GM12878 (cell line): ENCODE measurements at regions of chr17 and their contacts with region 1.

Region 1: DNA sequence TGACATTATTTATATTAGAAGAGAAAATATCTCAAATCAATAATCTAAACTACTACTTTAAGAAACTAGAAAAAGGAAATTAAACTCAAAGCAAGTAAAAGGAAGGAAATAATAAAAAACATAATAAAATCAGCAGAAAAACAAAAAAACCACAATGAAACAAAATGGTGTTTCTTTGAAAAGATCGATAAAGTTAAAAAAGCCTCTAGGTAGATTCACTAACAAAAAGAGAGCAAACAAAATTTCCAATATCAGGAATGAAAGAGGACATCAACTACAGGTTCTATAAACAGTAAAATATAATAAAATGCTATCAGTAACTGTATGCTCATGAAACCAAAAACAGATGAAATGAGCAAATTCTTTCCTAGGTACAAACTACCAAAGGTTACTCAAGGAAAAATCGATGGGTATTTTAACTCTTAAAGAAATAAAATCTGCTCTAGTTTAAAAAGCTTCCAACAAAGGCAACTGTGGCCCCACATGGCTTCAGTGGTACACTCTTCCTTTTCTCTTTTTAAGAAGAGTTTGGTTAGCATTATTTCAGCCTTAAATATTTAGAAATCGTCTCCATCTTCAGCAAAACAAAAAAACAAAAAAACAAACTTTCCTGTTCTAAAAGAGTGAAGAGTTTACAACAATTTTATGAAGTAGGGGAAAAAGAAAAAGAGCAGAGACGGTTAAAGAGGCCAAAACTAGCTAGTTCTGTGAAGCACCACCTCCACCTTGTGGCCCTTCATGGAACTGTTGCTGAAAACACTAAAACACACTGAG is 102.2 kb downstream of the TRIM37 start:
- DNase-seq: peak; percentile 48
- ATAC-seq: peak; percentile 55
- H3K4me3 ChIP-seq: no peak overlapping the region
- H3K27ac ChIP-seq: no peak overlapping the region
- H3K4me1 ChIP-seq: peaks cover 18% of the 10 kb centered on the region
- H3K27me3 ChIP-seq: no peaks in the 10 kb centered on the region
- CTCF ChIP-seq: peak; percentile 91 to 93 (median 92)
- EP300 ChIP-seq: no peak
- POLR2A ChIP-seq: no peak
- RAD21 ChIP-seq: peak; percentile 98

Region 2: GRCh38 chr17:58541249-58541648 is 463.3 kb before region 1 on chr17:
- CTCF ChIA-PET with region 1: interaction called, 12 read pairs
- POLR2A ChIA-PET with region 1: no interaction called
- RAD21 ChIA-PET with region 1: no interaction called
- SMC1A ChIA-PET with region 1: interaction called, 7 read pairs
- in situ Hi-C with region 1: no loop called
- intact Hi-C with region 1: no loop called
- DNase-seq: no peak
- ATAC-seq: peak; percentile 88
- H3K4me3 ChIP-seq: no peak overlapping the region
- H3K27ac ChIP-seq: no peak overlapping the region
- H3K4me1 ChIP-seq: no peaks in the 10 kb centered on the region
- H3K27me3 ChIP-seq: no peaks in the 10 kb centered on the region; a peak in 1 of 4 replicates
- CTCF ChIP-seq: peak; percentile 41 to 59 (median 47)
- EP300 ChIP-seq: no peak
- POLR2A ChIP-seq: no peak
- RAD21 ChIP-seq: peak; percentile 49

Region 3: GRCh38 chr17:58587702-58588254 is 416.7 kb before region 1 on chr17:
- CTCF ChIA-PET with region 1: interaction called, 51 read pairs
- POLR2A ChIA-PET with region 1: no interaction called
- RAD21 ChIA-PET with region 1: interaction called, 26 read pairs
- SMC1A ChIA-PET with region 1: interaction called, 53 read pairs
- in situ Hi-C with region 1: loop called (anchors 5 kb)
- intact Hi-C with region 1: loop called (anchors 1 kb)
- DNase-seq: no peak
- ATAC-seq: peak; percentile 92
- H3K4me3 ChIP-seq: no peak overlapping the region
- H3K27ac ChIP-seq: no peak overlapping the region
- H3K4me1 ChIP-seq: no peaks in the 10 kb centered on the region
- H3K27me3 ChIP-seq: no peaks in the 10 kb centered on the region
- CTCF ChIP-seq: peak; percentile 94 to 97 (median 97)
- EP300 ChIP-seq: no peak
- POLR2A ChIP-seq: no peak
- RAD21 ChIP-seq: peak; percentile 95

Region 4: GRCh38 chr17:58710936-58711775 is 293.4 kb before region 1 on chr17:
- CTCF ChIA-PET with region 1: interaction called, 110 read pairs
- POLR2A ChIA-PET with region 1: interaction called, 4 read pairs
- RAD21 ChIA-PET with region 1: interaction called, 71 read pairs
- SMC1A ChIA-PET with region 1: interaction called, 62 read pairs
- in situ Hi-C with region 1: loop called (anchors 5 kb)
- intact Hi-C with region 1: loop called (anchors 1 kb)
- DNase-seq: no peak
- ATAC-seq: peak; percentile 45; the same call in 2 of the 3 replicates
- H3K4me3 ChIP-seq: no peak overlapping the region
- H3K27ac ChIP-seq: no peak overlapping the region
- H3K4me1 ChIP-seq: peaks cover 16% of the 10 kb centered on the region
- H3K27me3 ChIP-seq: no peaks in the 10 kb centered on the region
- CTCF ChIP-seq: peak; percentile 57 to 71 (median 59)
- EP300 ChIP-seq: no peak
- POLR2A ChIP-seq: no peak
- RAD21 ChIP-seq: peak; percentile 92

Region 5: DNA sequence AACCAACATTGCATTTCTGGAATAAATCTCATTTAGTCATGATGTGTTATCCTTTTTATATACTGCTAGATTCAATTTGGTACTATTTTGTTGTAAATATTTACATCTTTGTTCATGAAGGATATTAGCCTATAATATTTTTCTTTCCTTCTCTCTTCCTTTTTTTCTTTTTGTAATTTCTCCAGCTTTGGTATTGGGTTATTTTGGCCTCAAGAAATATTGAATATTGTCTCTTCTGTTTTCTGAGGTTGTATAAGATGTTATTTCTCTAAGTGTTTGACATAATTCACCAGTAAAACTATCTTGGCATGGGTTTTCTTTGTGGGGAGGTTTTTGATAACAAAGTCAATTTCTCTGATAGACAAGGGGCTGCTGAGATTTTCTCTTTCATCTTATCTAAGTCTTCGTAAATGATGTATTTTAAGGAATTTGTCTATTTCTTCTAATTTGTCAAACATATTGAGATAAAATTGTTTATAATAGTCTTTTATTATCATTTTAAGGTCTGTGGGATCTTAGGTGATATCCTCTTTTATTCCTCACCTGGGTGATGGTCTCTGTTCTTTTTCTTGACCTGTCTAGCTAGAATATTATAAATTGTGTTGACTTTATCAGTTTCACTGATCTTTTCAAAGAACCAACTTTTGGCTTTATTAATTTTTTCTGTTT is 204.2 kb before region 1 on chr17:
- CTCF ChIA-PET with region 1: no interaction called
- POLR2A ChIA-PET with region 1: no interaction called
- RAD21 ChIA-PET with region 1: no interaction called
- SMC1A ChIA-PET with region 1: no interaction called
- in situ Hi-C with region 1: no loop called
- intact Hi-C with region 1: no loop called
- DNase-seq: no peak
- ATAC-seq: no peak
- H3K4me3 ChIP-seq: no peak overlapping the region
- H3K27ac ChIP-seq: no peak overlapping the region
- H3K4me1 ChIP-seq: no peaks in the 10 kb centered on the region
- H3K27me3 ChIP-seq: no peaks in the 10 kb centered on the region
- CTCF ChIP-seq: no peak
- EP300 ChIP-seq: no peak
- POLR2A ChIP-seq: no peak
- RAD21 ChIP-seq: no peak

Region 6: DNA sequence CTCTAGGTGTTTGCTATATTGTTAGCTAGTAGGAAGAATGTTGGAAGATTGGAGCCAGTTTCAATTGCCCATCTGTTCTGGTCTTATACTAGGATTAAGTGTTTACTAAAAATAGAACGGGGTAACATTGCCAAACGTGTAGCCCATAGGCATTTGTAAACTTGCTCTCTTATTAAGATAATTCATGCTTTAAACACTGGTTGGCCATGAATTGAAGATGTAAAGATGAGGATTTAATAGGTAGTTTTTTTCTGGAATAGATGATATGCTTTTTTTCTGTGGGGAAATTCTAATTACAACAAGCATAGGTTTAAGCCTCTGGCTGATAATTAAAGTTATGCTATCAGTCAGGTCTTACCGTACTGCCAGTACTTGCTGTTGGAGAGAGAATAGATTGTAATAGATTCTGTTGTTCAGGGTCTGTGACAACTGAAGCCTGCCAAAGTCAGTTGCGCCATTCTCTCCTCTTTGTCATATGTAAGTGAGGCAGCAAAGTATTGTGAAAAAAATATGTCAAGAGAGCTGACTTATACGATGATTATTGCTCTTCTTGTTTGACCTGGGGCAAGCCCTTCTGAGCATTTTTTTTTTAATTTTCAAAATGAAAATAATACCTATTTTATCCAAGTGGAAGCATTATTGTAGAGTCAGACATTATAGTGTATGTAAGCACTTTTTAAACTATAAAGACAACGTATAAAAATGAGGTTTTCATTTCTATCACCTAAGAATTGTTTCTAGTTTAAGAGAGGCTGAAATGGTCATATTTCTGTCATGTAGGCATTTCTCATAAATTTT is 181.9 kb before region 1 on chr17:
- CTCF ChIA-PET with region 1: no interaction called
- POLR2A ChIA-PET with region 1: no interaction called
- RAD21 ChIA-PET with region 1: no interaction called
- SMC1A ChIA-PET with region 1: no interaction called
- in situ Hi-C with region 1: no loop called
- intact Hi-C with region 1: no loop called
- DNase-seq: no peak
- ATAC-seq: no peak
- H3K4me3 ChIP-seq: no peak overlapping the region
- H3K27ac ChIP-seq: no peak overlapping the region
- H3K4me1 ChIP-seq: no peaks in the 10 kb centered on the region
- H3K27me3 ChIP-seq: no peaks in the 10 kb centered on the region
- CTCF ChIP-seq: no peak
- EP300 ChIP-seq: no peak
- POLR2A ChIP-seq: no peak
- RAD21 ChIP-seq: no peak

Region 7: GRCh38 chr17:58969156-58969555 is 35.4 kb before region 1 on chr17:
- CTCF ChIA-PET with region 1: interaction called, 59 read pairs
- POLR2A ChIA-PET with region 1: interaction called, 5 read pairs
- RAD21 ChIA-PET with region 1: interaction called, 11 read pairs
- SMC1A ChIA-PET with region 1: interaction called, 10 read pairs
- in situ Hi-C with region 1: no loop called
- intact Hi-C with region 1: no loop called
- DNase-seq: no peak
- ATAC-seq: peak; percentile 83
- H3K4me3 ChIP-seq: no peak overlapping the region
- H3K27ac ChIP-seq: no peak overlapping the region
- H3K4me1 ChIP-seq: peaks cover 4% of the 10 kb centered on the region
- H3K27me3 ChIP-seq: no peaks in the 10 kb centered on the region
- CTCF ChIP-seq: no peak
- EP300 ChIP-seq: no peak
- POLR2A ChIP-seq: no peak
- RAD21 ChIP-seq: no peak

Region 8: GRCh38 chr17:59018019-59018418 is 13.5 kb after region 1 on chr17:
- CTCF ChIA-PET with region 1: interaction called, 12 read pairs
- POLR2A ChIA-PET with region 1: no interaction called
- RAD21 ChIA-PET with region 1: no interaction called
- SMC1A ChIA-PET with region 1: interaction called, 3 read pairs
- in situ Hi-C with region 1: no loop called
- intact Hi-C with region 1: no loop called
- DNase-seq: no peak
- ATAC-seq: no peak
- H3K4me3 ChIP-seq: no peak overlapping the region
- H3K27ac ChIP-seq: no peak overlapping the region
- H3K4me1 ChIP-seq: no peaks in the 10 kb centered on the region
- H3K27me3 ChIP-seq: no peaks in the 10 kb centered on the region
- CTCF ChIP-seq: no peak
- EP300 ChIP-seq: no peak
- POLR2A ChIP-seq: no peak
- RAD21 ChIP-seq: no peak

Region 9: GRCh38 chr17:59399900-59400299 is 395.4 kb after region 1 on chr17:
- CTCF ChIA-PET with region 1: no interaction called
- POLR2A ChIA-PET with region 1: no interaction called
- RAD21 ChIA-PET with region 1: no interaction called
- SMC1A ChIA-PET with region 1: no interaction called
- in situ Hi-C with region 1: no loop called
- intact Hi-C with region 1: no loop called
- DNase-seq: no peak
- ATAC-seq: no peak
- H3K4me3 ChIP-seq: no peak overlapping the region
- H3K27ac ChIP-seq: no peak overlapping the region
- H3K4me1 ChIP-seq: no peaks in the 10 kb centered on the region
- H3K27me3 ChIP-seq: no peaks in the 10 kb centered on the region
- CTCF ChIP-seq: no peak
- EP300 ChIP-seq: no peak
- POLR2A ChIP-seq: no peak
- RAD21 ChIP-seq: no peak